RWPE1 (cell line): ENCODE measurements at regions of chr16 and their contacts with region 1.

Region 1: DNA sequence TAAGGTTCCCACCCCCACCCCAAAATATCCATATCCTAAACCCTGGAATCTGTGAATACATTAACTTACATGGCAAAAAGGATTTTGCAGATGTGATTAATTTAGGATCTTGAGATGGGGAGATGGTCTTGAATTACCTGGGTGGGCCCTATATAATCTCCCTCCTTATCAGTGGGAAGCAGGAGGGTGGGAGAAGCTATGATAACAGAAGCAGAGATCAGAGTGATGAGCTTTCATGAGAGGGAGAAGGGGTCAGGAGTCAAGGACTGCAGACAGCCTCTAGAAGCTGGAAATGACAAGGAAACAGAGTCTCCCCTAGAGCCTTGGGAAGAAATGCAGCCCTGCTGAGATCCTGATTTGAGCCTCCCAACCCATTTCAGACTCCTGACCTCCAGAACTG is 34.8 kb downstream of the PRSS54 start:
- DNase-seq: no peak
- H3K27ac ChIP-seq: no peak overlapping the region
- CTCF ChIP-seq: no peak

Region 2: DNA sequence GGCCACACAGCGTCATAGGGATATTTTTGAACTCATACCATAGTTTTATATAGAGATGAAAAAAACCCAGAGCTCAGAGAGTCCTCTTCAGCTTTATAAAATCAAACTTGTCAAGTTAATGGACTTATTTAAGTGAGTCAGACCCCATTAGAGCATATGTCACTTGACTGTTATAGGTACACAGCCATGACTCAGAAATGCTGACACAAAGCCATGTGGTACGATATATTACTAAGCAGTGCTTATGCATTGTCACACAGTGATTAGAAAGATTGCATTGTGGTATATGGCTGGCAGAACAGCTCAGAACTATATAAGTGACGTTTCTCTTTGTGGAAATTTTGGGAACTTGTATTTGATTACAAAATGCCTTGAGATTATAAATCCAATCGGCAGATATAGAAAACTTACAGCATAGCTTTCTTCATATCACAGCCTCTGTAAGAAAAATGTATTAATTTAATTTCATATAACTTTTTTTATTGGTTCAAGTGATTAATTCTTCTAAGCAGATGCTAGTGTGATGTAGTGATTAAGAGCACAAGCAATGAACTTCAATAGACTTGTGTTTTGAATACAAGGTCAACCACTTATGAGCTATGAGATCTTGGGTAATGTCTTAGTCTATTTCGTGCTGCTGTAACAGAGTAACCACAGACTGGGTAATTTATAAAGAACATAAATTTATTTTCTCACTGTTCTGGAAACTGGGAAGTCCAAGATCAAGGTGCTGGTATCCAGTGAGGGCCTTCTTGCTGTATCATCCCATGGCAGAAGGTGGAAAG is 106.4 kb after region 1 on chr16:
- CTCF ChIA-PET with region 1: no interaction called
- POLR2A ChIA-PET with region 1: no interaction called
- DNase-seq: peak; percentile 59
- H3K27ac ChIP-seq: no peak overlapping the region
- CTCF ChIP-seq: no peak

Region 3: DNA sequence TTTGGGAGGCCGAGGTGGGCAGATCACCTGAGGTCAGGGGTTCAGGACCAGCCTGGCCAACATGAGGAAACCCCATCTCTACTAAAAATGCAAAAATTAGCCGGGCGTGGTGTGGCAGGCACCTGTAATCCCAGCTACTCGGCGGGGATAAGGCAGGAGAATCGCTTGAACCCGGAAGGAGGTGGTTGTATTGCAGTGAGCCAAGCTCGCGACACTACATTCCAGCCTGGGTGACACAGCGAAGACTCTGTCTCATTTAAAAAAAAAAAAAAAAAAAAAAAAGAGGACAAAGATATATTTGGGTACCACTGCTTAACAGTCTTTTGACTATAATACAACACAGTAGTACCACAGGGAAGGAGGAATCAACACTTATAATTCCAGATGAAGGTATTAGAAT is 360.4 kb after region 1 on chr16:
- CTCF ChIA-PET with region 1: no interaction called
- POLR2A ChIA-PET with region 1: interaction called, 13 read pairs
- DNase-seq: no peak
- H3K27ac ChIP-seq: no peak overlapping the region
- CTCF ChIP-seq: no peak